Heart left ventricle (tissue), 16 donors: ENCODE measurements at regions of chr6 and their contacts with region 1.

Region 1: GRCh38 chr6:167547751-167548150 is 222.9 kb downstream of the TTLL2 start:
- DNase-seq: peak in 2 of 5 donors; percentile 45 to 56
- ATAC-seq: no peak
- H3K4me3 ChIP-seq: no peak overlapping the region
- H3K27ac ChIP-seq: peak overlapping the region in 6 of 12 donors; percentile 35 to 65 (median 44)
- H3K4me1 ChIP-seq: peaks cover 9 to 45% (median 28%) of the 10 kb centered on the region in 12 donors
- H3K27me3 ChIP-seq: no peaks in the 10 kb centered on the region
- CTCF ChIP-seq: no peak
- POLR2A ChIP-seq: no peak

Region 2: GRCh38 chr6:167493976-167494697 is 53.6 kb before region 1 on chr6:
- intact Hi-C with region 1: loop called in 1 of 10 experiments (anchors 5 kb)
- DNase-seq: peak; percentile 59 to 84 (median 62)
- ATAC-seq: peak; percentile 71 to 88 (median 80)
- H3K4me3 ChIP-seq: no peak overlapping the region
- H3K27ac ChIP-seq: peak overlapping the region in 2 of 12 donors; percentile 34
- H3K4me1 ChIP-seq: peaks cover 0 to 31% (median 14%) of the 10 kb centered on the region in 12 donors
- H3K27me3 ChIP-seq: no peaks in the 10 kb centered on the region
- CTCF ChIP-seq: no peak
- POLR2A ChIP-seq: no peak